ENCODE measurements at regions of chr6 and their contacts with region 1.

Region 1: DNA sequence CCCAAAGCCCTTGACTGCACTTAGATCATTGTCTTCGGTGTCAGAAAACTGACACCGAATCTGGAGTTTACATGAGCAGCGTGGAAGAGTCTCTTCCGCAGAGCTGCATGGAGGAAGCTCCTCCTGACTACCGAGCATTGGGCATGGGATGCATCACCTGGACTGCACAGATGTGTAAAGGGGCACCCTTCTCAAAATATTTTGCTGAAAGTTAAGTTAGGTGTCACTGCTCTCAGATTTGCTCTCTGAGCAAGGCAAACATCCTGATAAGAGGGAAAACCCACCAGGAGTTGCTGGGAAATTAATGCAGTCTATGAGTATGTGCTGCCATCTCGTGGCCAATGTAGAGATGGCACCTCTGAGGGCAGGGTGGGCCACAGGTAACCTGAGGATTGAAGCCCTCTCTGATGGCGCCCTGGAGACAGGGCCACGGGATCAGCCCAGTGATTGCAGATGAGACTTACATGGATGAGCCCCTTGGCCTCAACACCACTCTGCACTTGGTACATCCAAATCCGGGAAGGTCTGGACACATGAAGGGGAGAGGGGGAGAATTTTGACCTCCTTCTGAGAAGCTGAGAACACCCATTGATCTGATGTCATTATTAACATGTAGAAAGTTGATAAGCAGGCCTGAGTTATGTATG is 129.9 kb downstream of the LPA start:
- DNase-seq: peak; percentile 39 to 63
- ATAC-seq: peak; percentile 62 to 82 (median 78)
- H3K4me3 ChIP-seq: peak overlapping the region; percentile 13
- H3K27ac ChIP-seq: no peak overlapping the region
- H3K4me1 ChIP-seq: peaks cover 4% of the 10 kb centered on the region
- H3K27me3 ChIP-seq: no peaks in the 10 kb centered on the region
- CTCF ChIP-seq: peak; percentile 94

Region 2: GRCh38 chr6:160520043-160520904 is 13.9 kb before region 1 on chr6:
- intact Hi-C with region 1: loop called in 1 of 2 experiments (anchors 1 kb)
- DNase-seq: peak; percentile 76 to 88
- ATAC-seq: peak; percentile 91 to 97 (median 94)
- H3K4me3 ChIP-seq: peak overlapping the region; percentile 68
- H3K27ac ChIP-seq: peak overlapping the region; percentile 39
- H3K4me1 ChIP-seq: no peaks in the 10 kb centered on the region
- H3K27me3 ChIP-seq: no peaks in the 10 kb centered on the region
- CTCF ChIP-seq: no peak